ENCODE measurements at regions of chr2 and their contacts with region 1.

Region 1: DNA sequence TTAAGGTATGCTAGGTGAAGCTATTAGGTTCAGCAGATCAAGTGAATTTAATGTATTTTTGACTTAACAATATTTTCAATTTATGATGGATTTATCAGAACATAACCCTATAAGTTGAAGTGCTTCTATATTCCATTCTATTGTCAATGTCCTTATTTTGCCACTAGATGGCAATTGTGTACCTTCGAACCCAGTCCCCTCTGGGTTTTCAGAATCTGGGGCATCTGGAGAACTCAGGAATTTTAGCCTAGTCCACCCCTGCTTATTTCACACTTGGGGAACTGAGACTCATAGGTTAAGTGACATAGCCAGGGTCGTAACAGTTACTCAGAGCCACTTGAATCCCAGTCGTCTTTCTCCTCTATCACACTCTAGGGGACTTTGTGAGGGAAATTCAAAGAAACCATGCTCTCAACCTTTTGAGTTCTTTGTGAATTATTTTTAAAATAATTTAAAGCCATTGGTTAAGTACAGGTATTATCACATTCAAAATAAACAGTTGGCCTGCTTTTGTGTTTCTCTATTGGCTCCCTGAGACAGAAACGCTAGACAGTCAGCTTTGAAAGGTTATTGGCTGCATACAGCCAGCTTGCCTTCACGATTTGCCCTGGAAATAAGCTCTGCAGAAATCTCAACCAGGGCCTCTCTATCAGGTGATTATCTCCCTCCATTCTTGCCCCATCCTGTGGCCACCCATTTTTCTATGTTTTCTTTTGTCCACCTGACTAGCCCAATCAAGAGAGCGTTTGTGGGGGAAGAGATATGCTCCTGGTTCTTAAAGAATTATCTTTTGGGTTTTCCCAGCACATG is 145.0 kb downstream of the TTC27 start:
- DNase-seq: peak; percentile 73
- ATAC-seq: peak; percentile 75
- H3K4me3 ChIP-seq: no peak overlapping the region
- H3K27ac ChIP-seq: no peak overlapping the region
- H3K4me1 ChIP-seq: no peaks in the 10 kb centered on the region
- H3K27me3 ChIP-seq: no peaks in the 10 kb centered on the region
- CTCF ChIP-seq: peak; percentile 91

Region 2: DNA sequence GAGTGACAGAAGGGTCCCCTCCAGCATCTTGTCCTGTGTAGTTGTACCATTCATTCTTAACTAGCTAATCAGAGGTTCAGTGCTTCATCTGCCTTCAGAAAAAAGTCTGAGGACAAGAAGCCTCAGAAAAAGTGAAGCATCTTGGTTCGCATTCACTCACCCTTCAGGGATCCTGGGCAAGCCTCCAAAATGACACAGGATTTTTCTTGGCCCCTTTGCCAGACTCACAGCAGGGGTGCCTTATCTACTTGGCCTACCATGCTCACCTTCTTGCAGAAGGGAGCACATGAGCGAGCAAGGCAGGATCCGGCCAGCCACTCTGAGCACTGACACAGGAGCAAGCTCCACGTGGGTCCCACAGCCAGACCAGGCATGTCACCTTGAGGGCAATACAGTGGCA is 1315.2 kb before region 1 on chr2:
- CTCF ChIA-PET with region 1: no interaction called
- POLR2A ChIA-PET with region 1: no interaction called
- intact Hi-C with region 1: no loop called
- DNase-seq: no peak
- ATAC-seq: no peak
- H3K4me3 ChIP-seq: no peak overlapping the region
- H3K27ac ChIP-seq: no peak overlapping the region
- H3K4me1 ChIP-seq: no peaks in the 10 kb centered on the region
- H3K27me3 ChIP-seq: no peaks in the 10 kb centered on the region
- CTCF ChIP-seq: no peak

Region 3: DNA sequence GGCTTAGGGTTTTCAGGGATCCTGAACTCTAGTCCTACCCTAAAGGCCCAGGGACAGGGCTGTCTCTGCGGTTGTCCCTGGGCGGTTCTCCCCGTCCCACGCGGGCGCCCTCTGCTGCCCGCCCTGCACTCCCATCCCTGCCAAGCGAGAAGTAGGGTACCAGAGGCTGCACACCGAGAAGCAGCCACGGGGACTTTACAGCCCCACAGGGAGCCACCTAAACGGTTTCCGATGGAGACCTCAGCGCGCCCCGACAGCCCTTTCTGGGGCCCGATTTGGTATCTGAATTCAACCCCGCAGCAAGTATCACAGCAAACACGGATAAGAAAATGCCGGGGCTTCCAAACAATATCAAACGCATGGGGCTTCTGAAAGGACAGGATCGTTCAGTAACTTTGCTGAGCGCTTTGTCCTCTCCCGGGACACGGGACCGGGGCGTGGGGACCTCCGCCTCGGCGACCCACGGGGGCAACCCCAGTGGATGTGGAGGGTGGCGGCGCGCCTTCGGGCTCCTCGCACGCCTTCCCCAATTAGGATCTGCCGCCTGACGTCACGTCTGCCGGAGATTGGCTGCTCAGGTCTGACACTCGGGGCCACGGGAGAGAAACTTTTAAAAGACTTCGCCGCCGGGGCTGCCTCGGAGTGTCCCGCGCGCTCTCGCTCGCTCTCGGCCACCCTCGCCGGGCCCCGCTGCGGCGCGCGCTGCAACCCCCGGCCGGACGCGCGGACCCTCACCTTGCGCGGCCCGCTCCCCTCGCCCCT is 173.7 kb after region 1 on chr2 and contains the start of gene LTBP1:
- CTCF ChIA-PET with region 1: interaction called, 4 read pairs
- POLR2A ChIA-PET with region 1: no interaction called
- intact Hi-C with region 1: loop called (anchors 1 kb)
- DNase-seq: peak; percentile 80
- ATAC-seq: peak; percentile 75
- H3K4me3 ChIP-seq: peak within 1 kb of the TSS; percentile 72
- H3K27ac ChIP-seq: 0 out of 2 replicates have a peak within 1 kb of the TSS, but pooled peaks have one; percentile 21
- H3K4me1 ChIP-seq: peaks cover 7% of the 10 kb centered on the region
- H3K27me3 ChIP-seq: no peaks in the 10 kb centered on the region
- CTCF ChIP-seq: peak; percentile 95
- total RNA-seq, gene LTBP1: 34.0 and 45.9 TPM in 2 replicates

Region 4: GRCh38 chr2:33086400-33087015 is 313.7 kb after region 1 on chr2:
- CTCF ChIA-PET with region 1: no interaction called
- POLR2A ChIA-PET with region 1: no interaction called
- intact Hi-C with region 1: loop called (anchors 5 kb)
- DNase-seq: peak; percentile 29
- ATAC-seq: peak; percentile 60
- H3K4me3 ChIP-seq: no peak overlapping the region
- H3K27ac ChIP-seq: no peak overlapping the region
- H3K4me1 ChIP-seq: peaks cover 9% of the 10 kb centered on the region
- H3K27me3 ChIP-seq: no peaks in the 10 kb centered on the region
- CTCF ChIP-seq: no peak

Region 5: DNA sequence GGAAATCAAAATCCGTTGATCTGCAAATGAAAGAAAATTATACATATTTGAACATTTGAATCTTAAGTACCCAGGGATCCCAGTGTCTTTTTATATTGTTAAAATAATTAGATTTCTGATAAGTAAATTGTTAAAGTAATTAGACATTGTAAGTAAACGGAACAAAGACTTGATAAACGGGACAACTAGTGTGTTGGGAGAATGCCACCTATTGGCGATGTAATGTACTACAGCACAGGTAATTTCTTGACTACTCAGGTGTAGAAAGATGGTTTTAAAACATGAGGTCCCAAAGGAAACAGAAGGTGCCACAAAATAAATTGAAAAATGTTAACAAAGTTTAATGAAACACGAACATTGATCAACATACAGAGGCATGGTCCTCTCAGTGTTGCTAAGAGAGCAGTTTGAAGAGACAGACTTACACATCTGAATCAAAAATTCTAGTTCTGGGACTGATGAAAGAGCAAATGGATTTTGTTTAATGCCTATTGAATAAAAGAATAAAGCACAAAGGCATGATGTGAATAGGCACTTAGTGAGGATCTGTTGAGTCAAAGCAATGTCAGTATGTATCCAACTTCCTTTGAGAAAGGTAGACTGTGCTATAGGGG is 600.2 kb after region 1 on chr2:
- CTCF ChIA-PET with region 1: no interaction called
- POLR2A ChIA-PET with region 1: no interaction called
- intact Hi-C with region 1: loop called (anchors 10 kb)
- DNase-seq: peak; percentile 86
- ATAC-seq: peak; percentile 45; the same call in 1 of the 2 replicates
- H3K4me3 ChIP-seq: no peak overlapping the region
- H3K27ac ChIP-seq: peak overlapping the region; percentile 50
- H3K4me1 ChIP-seq: peaks cover 8% of the 10 kb centered on the region; the same call in 1 of the 2 replicates
- H3K27me3 ChIP-seq: no peaks in the 10 kb centered on the region
- CTCF ChIP-seq: peak; percentile 90

Region 6: DNA sequence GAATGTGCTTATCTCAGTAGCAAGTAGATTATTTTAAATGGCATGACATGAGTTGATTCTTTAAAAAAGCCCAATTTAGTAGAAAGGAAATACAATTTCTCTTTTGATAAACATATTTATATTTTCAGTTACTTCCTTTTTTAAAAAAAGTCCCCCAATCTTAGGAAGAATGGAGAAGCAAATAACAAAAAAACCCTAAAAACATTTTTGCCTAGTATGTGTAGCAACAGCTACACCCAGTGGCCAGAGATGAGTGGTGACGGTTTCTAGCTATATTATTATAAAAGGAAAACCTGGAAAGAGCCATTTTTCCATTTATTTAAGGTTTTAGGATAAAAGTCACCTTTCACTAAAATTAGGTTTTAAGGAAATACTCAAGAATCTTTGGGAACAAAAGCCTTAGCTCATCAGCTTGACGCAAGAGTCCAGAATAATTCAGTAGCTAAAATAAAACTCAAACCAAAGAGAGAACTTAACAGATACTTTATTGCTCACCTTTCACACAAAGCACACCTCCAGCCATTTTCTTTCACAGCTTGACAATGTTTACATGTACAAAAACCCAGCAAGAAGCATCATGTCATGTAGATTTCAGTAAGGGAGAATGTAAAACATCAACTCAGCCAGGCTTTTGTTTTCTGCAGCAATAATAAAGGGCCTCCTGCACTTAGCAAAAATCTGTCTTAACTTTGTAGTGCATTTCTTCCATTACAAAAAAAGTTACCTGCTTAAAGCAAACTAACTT is 810.5 kb after region 1 on chr2:
- CTCF ChIA-PET with region 1: no interaction called
- POLR2A ChIA-PET with region 1: no interaction called
- intact Hi-C with region 1: loop called (anchors 1 kb)
- DNase-seq: peak; percentile 60
- ATAC-seq: no peak
- H3K4me3 ChIP-seq: no peak overlapping the region
- H3K27ac ChIP-seq: no peak overlapping the region
- H3K4me1 ChIP-seq: no peaks in the 10 kb centered on the region
- H3K27me3 ChIP-seq: no peaks in the 10 kb centered on the region
- CTCF ChIP-seq: peak; percentile 91